ENCODE measurements at regions of chr17 and their contacts with region 1.

Region 1: GRCh38 chr17:29617125-29617480 is 5.6 kb downstream of the CORO6 start:
- DNase-seq: peak; percentile 86
- ATAC-seq: peak; percentile 27
- H3K4me3 Mint-ChIP-seq: peak overlapping the region; percentile 80
- H3K27ac Mint-ChIP-seq: no peak overlapping the region
- H3K4me1 Mint-ChIP-seq: peaks cover 53% of the 10 kb centered on the region
- H3K27me3 Mint-ChIP-seq: peaks cover 80% of the 10 kb centered on the region
- CTCF ChIP-seq: peak; percentile 49

Region 2: DNA sequence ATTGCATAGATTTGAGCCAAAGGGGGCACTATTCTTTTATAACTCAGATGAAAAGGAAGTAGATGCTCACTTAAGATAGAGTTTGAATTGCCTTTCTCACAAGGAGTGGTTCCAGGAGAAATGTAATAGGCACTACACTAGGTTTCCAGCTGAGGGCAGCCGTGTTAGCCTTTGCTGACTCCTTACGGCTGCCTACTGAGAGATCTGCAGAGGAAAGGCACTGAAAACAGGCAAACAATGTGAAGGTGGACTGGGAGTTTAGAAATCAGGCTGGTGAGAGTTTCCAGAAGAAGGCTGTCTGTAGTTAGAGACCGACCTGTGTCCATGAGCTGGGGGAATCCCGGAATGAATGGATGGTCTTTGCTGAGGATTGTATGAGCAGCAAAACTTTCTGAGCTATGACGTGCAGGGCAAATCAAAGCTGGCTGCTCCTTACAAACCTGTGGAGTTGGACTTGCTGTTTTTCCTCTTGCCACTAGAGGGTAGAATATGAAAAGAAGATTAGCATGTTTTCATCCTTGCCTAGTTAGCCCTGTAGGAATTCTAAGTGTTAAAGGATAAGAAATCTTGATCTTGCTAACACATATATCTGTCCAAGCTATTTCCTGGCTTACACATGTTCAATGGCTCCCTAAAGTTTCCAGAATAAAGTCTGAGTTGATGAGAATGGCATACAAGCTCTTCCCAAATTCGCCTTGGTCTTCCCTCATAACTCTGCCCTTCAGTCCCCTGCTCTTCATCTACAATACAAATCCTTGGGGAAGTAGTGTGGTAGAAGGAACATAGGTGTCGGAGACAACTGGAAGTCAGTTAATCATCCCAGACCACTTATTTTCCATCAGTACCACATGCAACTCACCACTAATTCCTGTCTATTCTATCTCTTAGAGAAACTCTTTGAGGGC is 247.0 kb before region 1 on chr17:
- CTCF ChIA-PET with region 1: interaction called, 17 read pairs
- POLR2A ChIA-PET with region 1: no interaction called
- DNase-seq: peak; percentile 68
- ATAC-seq: peak; percentile 94
- H3K4me3 Mint-ChIP-seq: no peak overlapping the region
- H3K27ac Mint-ChIP-seq: no peak overlapping the region
- H3K4me1 Mint-ChIP-seq: peaks cover 7% of the 10 kb centered on the region
- H3K27me3 Mint-ChIP-seq: no peaks in the 10 kb centered on the region
- CTCF ChIP-seq: peak; percentile 69

Region 3: DNA sequence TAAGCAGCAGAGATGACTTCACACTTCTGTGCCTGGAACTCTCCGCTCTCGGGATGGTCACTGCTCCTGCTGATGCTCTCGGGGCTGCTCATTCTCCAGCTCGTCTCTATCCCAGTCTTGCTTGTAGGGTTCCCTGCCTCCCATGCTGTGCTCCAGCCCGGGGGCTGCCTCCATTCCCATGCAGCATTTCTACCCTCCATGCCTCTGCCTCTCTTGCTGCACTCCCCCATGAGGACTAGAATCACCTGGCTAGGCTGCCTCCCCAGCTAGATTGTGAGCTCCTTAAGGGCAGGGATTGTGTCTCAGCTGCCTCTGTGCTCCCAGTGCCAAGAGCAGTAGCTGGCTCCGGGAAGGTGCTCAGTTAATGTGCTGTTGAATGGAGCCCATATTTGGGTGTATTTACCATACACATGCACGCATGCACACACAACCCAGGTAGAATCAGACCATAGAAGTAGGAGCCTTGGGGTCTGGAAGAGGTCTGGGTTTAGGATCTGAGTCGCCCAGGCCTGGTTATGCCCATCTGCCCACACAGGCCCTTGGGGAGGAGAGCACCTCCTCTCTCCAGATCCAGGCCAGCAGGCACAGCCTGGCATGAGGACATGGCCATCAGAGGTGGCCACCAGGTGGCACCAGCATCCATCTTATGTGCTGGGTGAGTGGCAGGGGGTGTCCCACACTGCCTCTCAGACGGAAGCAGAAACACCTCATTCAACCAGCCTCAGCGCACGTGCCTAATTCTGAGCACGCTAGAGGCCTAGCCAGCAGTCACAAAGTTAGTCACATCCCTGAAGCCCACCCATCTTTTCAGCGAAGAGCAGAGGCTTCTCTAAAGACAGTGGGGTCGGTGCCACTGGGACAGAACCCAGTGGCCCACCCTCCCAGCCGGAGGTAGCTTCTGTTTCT is 37.0 kb before region 1 on chr17:
- CTCF ChIA-PET with region 1: interaction called, 112 read pairs
- POLR2A ChIA-PET with region 1: no interaction called
- DNase-seq: peak; percentile 86
- ATAC-seq: peak; percentile 86
- H3K4me3 Mint-ChIP-seq: no peak overlapping the region
- H3K27ac Mint-ChIP-seq: peak overlapping the region; percentile 28; the same call in 1 of the 2 replicates
- H3K4me1 Mint-ChIP-seq: peaks cover 17% of the 10 kb centered on the region
- H3K27me3 Mint-ChIP-seq: no peaks in the 10 kb centered on the region
- CTCF ChIP-seq: peak; percentile 68

Region 4: DNA sequence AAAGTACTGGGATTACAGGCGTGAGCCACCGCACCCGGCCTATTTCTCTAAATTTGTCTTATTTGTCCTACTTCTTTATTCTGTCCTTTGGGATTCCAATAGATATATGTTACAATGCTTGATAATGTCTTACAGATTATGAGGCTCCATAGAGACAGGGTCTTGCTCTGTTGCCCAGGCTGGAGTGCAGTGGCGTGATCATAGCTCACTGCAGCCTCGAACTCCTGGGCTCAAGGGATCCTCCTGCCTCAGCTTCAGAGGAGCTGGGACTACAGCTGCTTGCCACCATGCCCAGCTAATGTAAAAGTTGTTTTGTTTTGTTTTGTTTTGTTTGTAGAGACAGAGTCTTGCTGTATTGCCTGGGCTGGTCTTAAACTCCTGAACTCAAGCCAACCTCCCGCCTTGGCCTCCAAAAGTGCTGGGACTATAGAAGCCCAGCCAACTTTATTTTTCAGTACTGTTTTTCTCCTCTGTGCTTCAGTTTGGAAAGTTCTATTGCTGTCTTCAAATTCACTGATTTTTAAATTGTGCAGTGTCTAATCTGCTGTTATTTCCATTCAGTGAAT is 13.9 kb before region 1 on chr17:
- CTCF ChIA-PET with region 1: interaction called, 85 read pairs
- POLR2A ChIA-PET with region 1: interaction called, 3 read pairs
- DNase-seq: no peak
- ATAC-seq: no peak
- H3K4me3 Mint-ChIP-seq: no peak overlapping the region
- H3K27ac Mint-ChIP-seq: no peak overlapping the region
- H3K4me1 Mint-ChIP-seq: peaks cover 12% of the 10 kb centered on the region
- H3K27me3 Mint-ChIP-seq: no peaks in the 10 kb centered on the region; the same call in 1 of the 2 replicates
- CTCF ChIP-seq: no peak

Region 5: DNA sequence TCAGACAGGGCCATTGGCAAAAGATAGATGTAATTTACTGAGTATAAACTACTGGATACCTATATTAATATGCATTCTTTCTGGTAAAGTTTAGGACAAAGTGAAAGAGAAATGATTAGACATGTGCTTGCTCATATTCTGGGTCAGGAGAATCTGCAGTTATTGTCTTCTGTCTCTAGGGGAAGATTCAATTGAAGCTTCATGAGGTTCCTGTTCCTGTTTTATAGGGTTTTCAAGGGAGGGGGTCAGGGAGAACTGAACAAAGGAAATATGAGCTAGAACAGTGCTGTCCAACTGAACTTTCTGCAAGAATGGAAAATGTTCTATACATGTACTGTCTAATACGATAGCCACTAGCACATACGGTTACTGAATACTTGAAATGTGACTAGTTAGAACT is 65.0 kb after region 1 on chr17:
- CTCF ChIA-PET with region 1: interaction called, 12 read pairs
- POLR2A ChIA-PET with region 1: no interaction called
- DNase-seq: no peak
- ATAC-seq: no peak
- H3K4me3 Mint-ChIP-seq: no peak overlapping the region
- H3K27ac Mint-ChIP-seq: no peak overlapping the region
- H3K4me1 Mint-ChIP-seq: peaks cover 11% of the 10 kb centered on the region
- H3K27me3 Mint-ChIP-seq: no peaks in the 10 kb centered on the region
- CTCF ChIP-seq: no peak

Region 6: GRCh38 chr17:29807520-29808351 is 190.6 kb after region 1 on chr17:
- CTCF ChIA-PET with region 1: interaction called, 14 read pairs
- POLR2A ChIA-PET with region 1: no interaction called
- DNase-seq: peak; percentile 62
- ATAC-seq: peak; percentile 65
- H3K4me3 Mint-ChIP-seq: no peak overlapping the region
- H3K27ac Mint-ChIP-seq: no peak overlapping the region
- H3K4me1 Mint-ChIP-seq: peaks cover 6% of the 10 kb centered on the region; the same call in 1 of the 2 replicates
- H3K27me3 Mint-ChIP-seq: no peaks in the 10 kb centered on the region
- CTCF ChIP-seq: peak; percentile 64

Measured in WTC11 (cell line).